CD4-positive, alpha-beta memory T cell (primary cell): ENCODE measurements at regions of chr3 and their contacts with region 1.

Region 1: GRCh38 chr3:43540624-43541023 is 81.2 kb downstream of the ANO10 start:
- DNase-seq: no peak
- H3K4me3 ChIP-seq: no peak overlapping the region
- H3K4me3 Mint-ChIP-seq: no peak overlapping the region
- H3K27ac ChIP-seq: no peak overlapping the region
- H3K27ac Mint-ChIP-seq: no peak overlapping the region
- H3K4me1 ChIP-seq: no peaks in the 10 kb centered on the region
- H3K4me1 Mint-ChIP-seq: no peaks in the 10 kb centered on the region
- H3K27me3 ChIP-seq: no peaks in the 10 kb centered on the region
- H3K27me3 Mint-ChIP-seq: no peaks in the 10 kb centered on the region

Region 2: DNA sequence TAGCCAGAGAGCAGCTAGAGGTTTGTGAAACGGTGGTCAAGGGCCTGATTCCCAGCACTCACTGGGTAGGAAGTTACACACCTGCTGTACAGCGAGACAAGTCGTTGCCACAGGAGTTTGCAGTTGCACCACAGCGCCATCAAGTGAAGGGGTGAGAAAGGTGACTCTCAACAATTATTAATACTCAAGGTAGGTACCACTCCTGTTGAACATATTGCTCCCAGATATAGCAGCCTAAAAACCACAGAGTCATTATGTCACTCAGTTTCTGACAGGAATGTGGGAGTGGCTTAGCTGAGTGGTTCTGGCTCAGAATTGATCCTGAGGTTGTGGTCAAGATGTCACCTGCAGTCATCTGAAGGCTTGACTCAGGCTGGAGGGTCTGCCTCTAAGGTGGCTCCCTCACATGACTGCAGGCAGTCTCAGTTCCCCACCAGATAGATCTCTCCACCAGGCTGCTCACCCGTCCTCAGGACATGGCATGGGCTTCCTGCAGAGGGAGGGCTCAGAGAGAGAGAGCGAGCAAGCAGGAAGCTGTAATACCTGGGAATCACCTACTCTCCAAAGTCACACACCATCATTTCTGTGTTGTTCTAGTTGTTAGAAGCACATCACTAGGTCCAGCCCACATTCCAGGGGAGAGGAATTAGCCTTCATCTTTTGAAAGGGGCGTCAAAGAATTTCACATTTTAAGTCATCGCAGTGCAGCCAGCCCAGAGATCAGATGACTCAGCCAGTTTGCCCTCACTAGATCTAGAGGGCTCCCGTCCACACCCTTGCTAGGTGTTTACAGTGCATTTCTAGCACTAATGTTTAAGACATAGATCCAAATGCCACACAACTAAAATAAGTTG is 98.2 kb after region 1 on chr3:
- CTCF ChIA-PET with region 1: interaction called, 4 read pairs
- POLR2A ChIA-PET with region 1: no interaction called
- intact Hi-C with region 1: loop called (anchors 1 kb)
- DNase-seq: peak; percentile 12 to 44 (median 14)
- H3K4me3 ChIP-seq: no peak overlapping the region
- H3K4me3 Mint-ChIP-seq: no peak overlapping the region
- H3K27ac ChIP-seq: no peak overlapping the region
- H3K27ac Mint-ChIP-seq: peak overlapping the region in 1 of 7 donors; percentile 30
- H3K4me1 ChIP-seq: no peaks in the 10 kb centered on the region
- H3K4me1 Mint-ChIP-seq: peaks cover 0 to 5% (median 2%) of the 10 kb centered on the region in 4 donors
- H3K27me3 ChIP-seq: no peaks in the 10 kb centered on the region
- H3K27me3 Mint-ChIP-seq: peaks cover 0 to 6% of the 10 kb centered on the region in 2 donors

Region 3: GRCh38 chr3:43759297-43759782 is 218.7 kb after region 1 on chr3:
- CTCF ChIA-PET with region 1: interaction called, 6 read pairs
- POLR2A ChIA-PET with region 1: interaction called, 3 read pairs
- intact Hi-C with region 1: loop called (anchors 1 kb)
- DNase-seq: peak in 2 of 5 donors; percentile 11 to 15
- H3K4me3 ChIP-seq: no peak overlapping the region
- H3K4me3 Mint-ChIP-seq: no peak overlapping the region
- H3K27ac ChIP-seq: no peak overlapping the region
- H3K27ac Mint-ChIP-seq: peak overlapping the region in 2 of 7 donors; percentile 2 to 38
- H3K4me1 ChIP-seq: peaks cover 32% of the 10 kb centered on the region
- H3K4me1 Mint-ChIP-seq: peaks cover 26 to 51% (median 41%) of the 10 kb centered on the region in 4 donors
- H3K27me3 ChIP-seq: no peaks in the 10 kb centered on the region
- H3K27me3 Mint-ChIP-seq: no peaks in the 10 kb centered on the region

Region 4: GRCh38 chr3:44198284-44199269 is 658.0 kb after region 1 on chr3:
- CTCF ChIA-PET with region 1: interaction called, 9 read pairs
- POLR2A ChIA-PET with region 1: no interaction called
- intact Hi-C with region 1: loop called (anchors 1 kb)
- DNase-seq: peak; percentile 52 to 62 (median 56)
- H3K4me3 ChIP-seq: no peak overlapping the region
- H3K4me3 Mint-ChIP-seq: no peak overlapping the region
- H3K27ac ChIP-seq: no peak overlapping the region
- H3K27ac Mint-ChIP-seq: no peak overlapping the region
- H3K4me1 ChIP-seq: no peaks in the 10 kb centered on the region
- H3K4me1 Mint-ChIP-seq: peaks cover 0 to 6% (median under 1%) of the 10 kb centered on the region in 4 donors
- H3K27me3 ChIP-seq: no peaks in the 10 kb centered on the region
- H3K27me3 Mint-ChIP-seq: peaks cover 5 to 18% of the 10 kb centered on the region in 2 donors